PC-9 (cell line): ENCODE measurements at regions of chr3 and their contacts with region 1.

Region 1: DNA sequence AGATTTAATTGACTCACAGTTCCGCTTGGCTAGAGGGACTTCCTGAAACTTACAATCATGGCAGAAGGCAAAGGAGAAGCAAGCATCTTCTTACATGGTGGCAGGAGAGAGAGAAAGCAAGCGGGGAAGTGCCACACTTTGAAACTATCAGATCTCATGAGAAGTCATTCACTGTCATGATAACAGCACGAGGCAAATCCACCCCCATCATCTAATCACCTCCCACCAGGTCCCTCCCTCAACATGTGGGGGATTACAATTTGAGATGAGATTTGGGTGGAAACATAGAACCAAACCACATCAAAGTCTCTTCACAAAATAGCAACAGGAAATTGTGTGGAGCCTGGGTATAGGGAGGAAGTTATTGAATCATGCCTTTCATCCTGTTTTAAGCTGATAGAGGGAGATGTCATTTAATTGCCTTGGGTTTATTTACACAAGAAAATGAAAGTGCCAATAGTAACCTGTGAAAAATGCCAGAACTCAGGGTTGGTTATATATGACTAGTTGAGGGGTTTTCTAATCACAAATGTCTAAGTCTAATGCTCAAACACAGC is 624.8 kb upstream of the LMCD1 start:
- DNase-seq: no peak
- H3K4me3 ChIP-seq: no peak overlapping the region
- H3K27ac ChIP-seq: no peak overlapping the region
- H3K4me1 ChIP-seq: peaks cover 16% of the 10 kb centered on the region
- H3K27me3 ChIP-seq: no peaks in the 10 kb centered on the region
- CTCF ChIP-seq: no peak

Region 2: DNA sequence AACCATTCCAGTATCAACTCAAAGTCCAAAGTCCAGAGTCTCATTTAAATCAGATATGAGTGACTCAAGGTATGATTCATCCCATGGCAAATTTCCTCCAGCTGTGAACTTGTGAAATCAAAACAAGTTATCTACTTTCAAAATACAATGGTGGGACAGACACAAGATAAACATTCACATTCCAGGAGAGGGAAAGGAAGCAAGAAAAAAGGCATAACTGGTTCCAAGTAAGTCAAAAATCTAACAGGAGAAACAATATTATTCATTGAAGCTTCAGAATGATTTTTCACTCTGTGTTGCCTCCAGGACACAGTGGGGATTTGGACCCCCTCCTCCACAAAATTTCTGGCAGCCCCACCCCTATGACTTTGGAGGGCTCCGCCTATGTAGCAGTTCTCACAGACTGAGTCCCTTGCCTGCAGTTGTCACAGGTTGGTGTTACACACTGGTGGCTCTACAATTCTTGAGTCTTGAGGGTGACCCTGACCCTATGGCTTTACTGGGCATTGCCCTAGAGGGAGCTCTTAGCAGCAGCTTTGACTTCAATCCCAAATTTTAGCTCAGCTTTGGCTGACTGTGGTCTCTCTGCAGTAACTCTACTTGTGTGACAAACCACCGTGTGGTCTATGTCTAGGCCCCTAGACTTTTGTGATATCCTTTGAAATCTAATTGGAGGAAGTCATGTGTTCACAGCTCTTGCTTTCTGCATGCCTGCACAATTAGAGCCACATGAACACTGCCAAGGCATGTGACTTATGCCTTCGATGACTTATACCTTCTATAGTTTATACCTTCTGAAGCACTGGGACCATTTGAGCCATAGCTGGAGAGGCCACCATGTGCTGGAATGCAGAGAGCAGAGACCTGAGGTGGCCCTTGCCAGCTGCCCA is 371.7 kb before region 1 on chr3:
- CTCF ChIA-PET with region 1: no interaction called
- POLR2A ChIA-PET with region 1: no interaction called
- intact Hi-C with region 1: loop called (anchors 10 kb)
- DNase-seq: peak; percentile 40 to 55
- H3K4me3 ChIP-seq: no peak overlapping the region
- H3K27ac ChIP-seq: peak overlapping the region; percentile 36; the same call in 1 of the 2 replicates
- H3K4me1 ChIP-seq: no peaks in the 10 kb centered on the region; the same call in 1 of the 2 replicates
- H3K27me3 ChIP-seq: no peaks in the 10 kb centered on the region
- CTCF ChIP-seq: no peak

Region 3: DNA sequence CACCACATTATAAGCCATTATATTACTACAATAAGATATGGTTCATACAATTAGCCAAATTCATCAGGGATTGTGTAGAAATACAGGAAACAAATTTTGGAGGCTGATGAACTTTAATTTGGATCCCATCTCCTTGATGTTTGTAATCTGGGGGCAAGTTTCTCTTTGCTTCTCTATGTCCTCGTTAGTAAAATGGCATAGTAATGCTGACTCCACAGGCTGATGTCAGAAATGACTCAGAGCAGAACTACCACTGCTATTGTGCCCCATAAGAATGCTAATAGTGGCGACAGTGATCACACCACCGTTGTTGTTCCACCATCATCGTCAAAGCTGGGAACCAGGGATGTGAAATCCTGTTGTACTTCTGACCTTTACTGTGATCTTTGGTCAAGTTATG is 97.5 kb before region 1 on chr3:
- CTCF ChIA-PET with region 1: no interaction called
- POLR2A ChIA-PET with region 1: interaction called, 10 read pairs
- intact Hi-C with region 1: no loop called
- DNase-seq: no peak
- H3K4me3 ChIP-seq: no peak overlapping the region
- H3K27ac ChIP-seq: no peak overlapping the region
- H3K4me1 ChIP-seq: no peaks in the 10 kb centered on the region
- H3K27me3 ChIP-seq: no peaks in the 10 kb centered on the region
- CTCF ChIP-seq: no peak